ENCODE measurements at regions of chr11 and their contacts with region 1.

Region 1: DNA sequence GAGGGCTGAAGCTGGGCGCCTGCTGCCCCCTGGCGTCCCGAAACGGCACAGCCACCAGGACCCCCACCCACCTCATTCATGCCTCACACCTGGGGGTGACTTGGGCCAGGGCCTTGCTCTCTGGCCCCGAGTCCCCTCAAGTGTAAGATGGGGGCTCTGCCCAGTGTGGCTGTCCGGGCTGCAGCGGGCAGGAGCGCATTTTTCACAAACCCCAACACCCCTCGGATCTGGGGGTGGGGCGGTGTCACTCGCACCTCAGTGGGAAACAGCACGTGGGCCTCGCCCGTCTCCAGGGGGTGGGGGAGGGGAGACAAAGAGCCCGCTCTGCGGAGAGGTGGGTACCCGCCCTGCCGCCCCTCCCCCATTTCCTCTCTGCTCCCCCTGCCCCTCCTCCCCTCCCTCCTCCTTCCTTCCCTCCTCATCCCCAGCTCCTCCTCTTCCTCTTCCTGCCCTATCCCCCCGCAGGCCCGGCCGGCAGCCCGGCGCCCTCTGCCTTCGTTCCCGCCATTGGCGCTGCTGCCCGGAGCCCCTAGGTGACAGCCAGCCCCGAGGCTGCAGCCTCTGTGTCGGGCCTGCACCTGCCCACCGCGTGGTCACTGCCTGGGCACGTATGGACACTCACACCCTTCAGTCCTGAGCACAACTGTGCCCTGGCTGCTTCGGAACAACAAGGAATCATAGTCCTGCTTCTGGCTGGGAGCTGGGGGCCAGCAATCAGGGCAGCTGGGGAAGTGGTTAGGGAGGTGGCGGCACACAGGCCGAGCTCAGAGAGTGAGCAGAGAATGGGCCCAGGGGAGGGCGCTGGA is 6.8 kb upstream of the CDKN1C start:
- DNase-seq: peak; percentile 48 to 78 (median 67)
- ATAC-seq: peak; percentile 73
- H3K4me3 ChIP-seq: peak overlapping the region; percentile 53
- H3K4me3 Mint-ChIP-seq: peak overlapping the region; percentile 58 to 85 (median 76)
- H3K27ac ChIP-seq: peak overlapping the region; percentile 67
- H3K27ac Mint-ChIP-seq: peak overlapping the region; percentile 78 to 89 (median 84)
- H3K4me1 ChIP-seq: peaks cover 14 to 28% of the 10 kb centered on the region in 2 donors
- H3K4me1 Mint-ChIP-seq: peaks cover 15 to 37% (median 25%) of the 10 kb centered on the region in 7 donors
- H3K27me3 ChIP-seq: no peaks in the 10 kb centered on the region
- H3K27me3 Mint-ChIP-seq: peaks cover 0 to 6% (median 0%) of the 10 kb centered on the region in 5 donors

Region 2: GRCh38 chr11:2305140-2305840 is 587.1 kb before region 1 on chr11:
- CTCF ChIA-PET with region 1: interaction called, 3 read pairs
- POLR2A ChIA-PET with region 1: interaction called, 4 read pairs
- intact Hi-C with region 1: loop called (anchors 5 to 10 kb)
- DNase-seq: peak; percentile 62 to 84 (median 76)
- ATAC-seq: peak; percentile 65
- H3K4me3 ChIP-seq: peak overlapping the region; percentile 38
- H3K4me3 Mint-ChIP-seq: peak overlapping the region; percentile 77 to 98 (median 92)
- H3K27ac ChIP-seq: peak overlapping the region; percentile 81
- H3K27ac Mint-ChIP-seq: peak overlapping the region; percentile 86 to 96 (median 90)
- H3K4me1 ChIP-seq: peaks cover 40 to 55% of the 10 kb centered on the region in 2 donors
- H3K4me1 Mint-ChIP-seq: peaks cover 12 to 54% (median 36%) of the 10 kb centered on the region in 7 donors
- H3K27me3 ChIP-seq: no peaks in the 10 kb centered on the region
- H3K27me3 Mint-ChIP-seq: no peaks in the 10 kb centered on the region

Region 3: GRCh38 chr11:2428322-2428795 is 464.1 kb before region 1 on chr11:
- CTCF ChIA-PET with region 1: interaction called, 4 read pairs
- POLR2A ChIA-PET with region 1: no interaction called
- intact Hi-C with region 1: loop called (anchors 1 kb)
- DNase-seq: peak; percentile 67 to 85 (median 79)
- ATAC-seq: peak; percentile 87
- H3K4me3 ChIP-seq: no peak overlapping the region
- H3K4me3 Mint-ChIP-seq: no peak overlapping the region
- H3K27ac ChIP-seq: no peak overlapping the region
- H3K27ac Mint-ChIP-seq: no peak overlapping the region
- H3K4me1 ChIP-seq: no peaks in the 10 kb centered on the region
- H3K4me1 Mint-ChIP-seq: peaks cover 0 to 4% (median 0%) of the 10 kb centered on the region in 7 donors
- H3K27me3 ChIP-seq: no peaks in the 10 kb centered on the region
- H3K27me3 Mint-ChIP-seq: no peaks in the 10 kb centered on the region

Region 4: GRCh38 chr11:2666401-2666741 is 226.0 kb before region 1 on chr11:
- CTCF ChIA-PET with region 1: no interaction called
- POLR2A ChIA-PET with region 1: no interaction called
- intact Hi-C with region 1: no loop called
- DNase-seq: no peak
- ATAC-seq: no peak
- H3K4me3 ChIP-seq: no peak overlapping the region
- H3K4me3 Mint-ChIP-seq: no peak overlapping the region
- H3K27ac ChIP-seq: no peak overlapping the region
- H3K27ac Mint-ChIP-seq: no peak overlapping the region
- H3K4me1 ChIP-seq: no peaks in the 10 kb centered on the region
- H3K4me1 Mint-ChIP-seq: peaks cover 0 to 6% (median 2%) of the 10 kb centered on the region in 7 donors
- H3K27me3 ChIP-seq: no peaks in the 10 kb centered on the region
- H3K27me3 Mint-ChIP-seq: no peaks in the 10 kb centered on the region

Region 5: DNA sequence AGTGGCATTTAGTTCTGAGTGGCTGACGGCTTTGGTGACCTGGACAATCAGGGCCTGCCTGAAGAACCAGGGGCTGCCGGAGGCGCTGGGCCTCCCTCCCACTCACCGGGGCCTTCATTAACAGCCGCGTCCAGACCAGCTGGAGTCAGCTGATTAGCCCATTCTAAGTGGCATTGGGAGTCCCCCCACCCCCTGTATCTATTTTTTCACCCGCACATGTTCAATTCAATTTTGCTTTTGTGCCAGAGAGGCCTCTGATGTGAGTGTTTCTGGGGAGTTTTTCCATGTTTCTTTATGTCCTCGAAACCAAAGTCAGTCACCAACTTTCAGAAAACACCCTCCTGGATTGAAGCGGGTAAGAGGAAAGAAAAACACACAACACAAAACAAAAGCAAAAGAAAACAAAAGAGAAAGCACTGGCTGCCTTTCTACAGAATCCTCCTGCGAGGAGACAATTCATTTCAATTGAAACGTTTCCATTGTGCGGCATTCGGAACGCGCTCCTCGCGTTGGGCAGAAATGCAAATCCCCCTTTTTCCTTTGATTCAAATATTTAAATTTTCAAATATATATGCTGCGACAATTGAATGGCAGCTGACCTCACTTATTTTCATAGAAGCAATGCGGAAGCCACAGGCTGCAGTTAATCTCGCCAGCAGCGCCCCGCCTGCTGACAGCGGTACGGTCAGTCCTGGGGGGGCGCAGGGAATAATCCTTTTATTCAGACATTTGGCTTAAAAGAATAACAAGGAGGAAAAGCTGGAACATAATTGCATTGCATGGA is 24.5 kb before region 1 on chr11:
- CTCF ChIA-PET with region 1: no interaction called
- POLR2A ChIA-PET with region 1: no interaction called
- intact Hi-C with region 1: no loop called
- DNase-seq: no peak
- ATAC-seq: no peak
- H3K4me3 ChIP-seq: no peak overlapping the region
- H3K4me3 Mint-ChIP-seq: peak overlapping the region in 5 of 10 donors; percentile 10 to 58 (median 50)
- H3K27ac ChIP-seq: no peak overlapping the region
- H3K27ac Mint-ChIP-seq: no peak overlapping the region
- H3K4me1 ChIP-seq: no peaks in the 10 kb centered on the region
- H3K4me1 Mint-ChIP-seq: peaks cover 0 to 18% (median 15%) of the 10 kb centered on the region in 7 donors
- H3K27me3 ChIP-seq: peaks cover 0 to 4% of the 10 kb centered on the region in 2 donors
- H3K27me3 Mint-ChIP-seq: peaks cover 51 to 72% (median 54%) of the 10 kb centered on the region in 5 donors

Region 6: GRCh38 chr11:2930704-2931428 is 38.4 kb after region 1 on chr11:
- CTCF ChIA-PET with region 1: interaction called, 9 read pairs
- POLR2A ChIA-PET with region 1: no interaction called
- intact Hi-C with region 1: loop called (anchors 1 to 2 kb)
- DNase-seq: peak in 1 of 9 donors; percentile 61
- ATAC-seq: peak; percentile 14
- H3K4me3 ChIP-seq: peak overlapping the region; percentile 61
- H3K4me3 Mint-ChIP-seq: peak overlapping the region; percentile 66 to 86 (median 78)
- H3K27ac ChIP-seq: no peak overlapping the region
- H3K27ac Mint-ChIP-seq: peak overlapping the region in 4 of 9 donors; percentile 32 to 76 (median 46)
- H3K4me1 ChIP-seq: peaks cover 13 to 20% of the 10 kb centered on the region in 2 donors
- H3K4me1 Mint-ChIP-seq: peaks cover 14 to 35% (median 20%) of the 10 kb centered on the region in 7 donors
- H3K27me3 ChIP-seq: peaks cover 3 to 4% of the 10 kb centered on the region in 2 donors
- H3K27me3 Mint-ChIP-seq: peaks cover 4 to 30% (median 8%) of the 10 kb centered on the region in 5 donors

Region 7: DNA sequence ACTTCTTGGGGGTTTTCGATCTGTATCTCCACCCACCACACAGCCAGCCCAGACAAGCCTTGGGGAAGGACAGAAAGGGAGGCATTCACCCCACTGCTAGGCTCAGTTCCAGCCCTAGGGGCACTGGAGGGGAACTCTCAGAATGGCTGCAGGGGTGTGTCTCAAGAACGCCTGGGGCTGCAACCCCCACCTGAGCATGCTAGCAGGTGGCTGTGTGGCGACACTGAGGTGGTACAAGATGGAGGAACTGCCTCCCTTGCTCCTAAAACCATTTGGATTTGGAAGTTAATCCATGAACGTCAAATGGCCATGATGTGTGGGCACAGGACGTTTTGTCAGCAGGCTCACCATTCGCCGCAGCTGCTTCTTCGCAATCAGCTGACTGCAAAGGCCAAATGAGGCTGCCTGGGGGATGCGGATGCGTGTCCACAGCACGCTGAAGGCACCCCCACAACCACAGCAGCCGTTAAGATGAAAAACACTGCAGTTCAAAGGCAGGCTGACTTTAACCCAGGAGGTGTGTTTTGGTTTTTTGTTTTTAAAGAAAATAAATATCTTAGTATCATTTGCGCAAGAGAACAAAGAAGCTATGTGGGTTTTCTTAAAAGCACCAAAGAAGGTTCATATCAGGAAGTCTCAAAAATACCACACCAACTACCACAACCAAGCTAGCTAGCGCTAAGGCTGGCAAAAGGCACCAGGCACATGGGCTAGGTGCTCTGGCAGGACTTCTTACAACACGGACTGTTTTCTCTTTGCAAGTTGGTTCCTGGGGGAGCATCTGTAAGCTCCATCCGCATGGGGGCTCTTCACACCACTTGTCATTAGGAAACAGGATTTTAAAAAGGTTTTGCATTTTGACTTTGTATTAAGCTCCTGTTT is 121.9 kb after region 1 on chr11:
- CTCF ChIA-PET with region 1: no interaction called
- POLR2A ChIA-PET with region 1: interaction called, 13 read pairs
- intact Hi-C with region 1: loop called in 1 of 2 experiments (anchors 2 kb)
- DNase-seq: peak; percentile 43 to 95 (median 90)
- ATAC-seq: peak; percentile 93
- H3K4me3 ChIP-seq: peak overlapping the region; percentile 46
- H3K4me3 Mint-ChIP-seq: peak overlapping the region; percentile 60 to 82 (median 72)
- H3K27ac ChIP-seq: peak overlapping the region; percentile 45
- H3K27ac Mint-ChIP-seq: peak overlapping the region; percentile 80 to 97 (median 93)
- H3K4me1 ChIP-seq: peaks cover 30 to 36% of the 10 kb centered on the region in 2 donors
- H3K4me1 Mint-ChIP-seq: peaks cover 11 to 60% (median 40%) of the 10 kb centered on the region in 7 donors
- H3K27me3 ChIP-seq: no peaks in the 10 kb centered on the region
- H3K27me3 Mint-ChIP-seq: no peaks in the 10 kb centered on the region

Region 8: DNA sequence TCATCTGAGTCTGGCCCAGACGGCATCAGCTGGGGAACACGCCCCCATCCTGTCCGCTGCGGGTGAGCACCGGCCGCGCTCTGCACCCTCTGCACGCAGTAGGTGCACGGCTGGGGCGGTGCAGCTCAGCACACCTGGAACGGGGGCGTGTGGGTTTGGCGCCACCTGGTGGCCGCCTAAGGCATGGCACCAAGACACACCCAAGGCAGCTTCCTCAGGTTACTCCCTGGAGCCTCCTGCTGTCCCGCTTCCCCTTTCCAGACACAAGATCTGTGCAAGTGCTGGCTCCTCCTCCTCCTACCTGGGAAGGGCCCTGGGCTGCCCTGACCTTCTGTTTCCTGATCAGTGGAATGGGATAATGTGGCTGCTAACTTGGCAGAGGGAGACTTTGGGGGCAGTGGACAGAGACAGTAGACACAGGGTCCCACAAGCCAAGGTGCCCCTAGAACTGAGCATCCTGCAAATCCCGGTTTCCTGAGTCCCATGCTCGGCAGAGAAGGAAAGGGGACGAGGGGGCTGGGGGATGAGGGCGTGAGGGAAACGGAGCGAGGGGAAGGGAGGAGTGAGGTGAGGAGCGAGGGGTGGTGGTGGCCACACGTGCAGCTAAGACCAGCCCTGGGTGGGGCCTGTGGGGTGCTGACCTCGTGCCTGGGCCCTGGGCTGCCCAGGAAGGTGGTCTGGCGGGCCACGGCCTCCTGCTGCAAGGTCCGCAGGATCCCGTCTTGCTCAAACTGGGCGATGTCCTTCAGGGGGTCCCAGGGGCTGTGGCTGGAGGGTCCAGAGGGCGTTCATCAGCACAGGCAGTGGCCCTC is 199.6 kb after region 1 on chr11:
- CTCF ChIA-PET with region 1: interaction called, 12 read pairs
- POLR2A ChIA-PET with region 1: no interaction called
- intact Hi-C with region 1: loop called (anchors 1 to 2 kb)
- DNase-seq: peak; percentile 38 to 79 (median 66)
- ATAC-seq: peak; percentile 87
- H3K4me3 ChIP-seq: no peak overlapping the region
- H3K4me3 Mint-ChIP-seq: no peak overlapping the region
- H3K27ac ChIP-seq: no peak overlapping the region
- H3K27ac Mint-ChIP-seq: peak overlapping the region in 1 of 9 donors; percentile 26
- H3K4me1 ChIP-seq: no peaks in the 10 kb centered on the region
- H3K4me1 Mint-ChIP-seq: peaks cover 0 to 16% (median 0%) of the 10 kb centered on the region in 7 donors
- H3K27me3 ChIP-seq: no peaks in the 10 kb centered on the region
- H3K27me3 Mint-ChIP-seq: peaks cover 0 to 4% (median 0%) of the 10 kb centered on the region in 5 donors

Region 9: DNA sequence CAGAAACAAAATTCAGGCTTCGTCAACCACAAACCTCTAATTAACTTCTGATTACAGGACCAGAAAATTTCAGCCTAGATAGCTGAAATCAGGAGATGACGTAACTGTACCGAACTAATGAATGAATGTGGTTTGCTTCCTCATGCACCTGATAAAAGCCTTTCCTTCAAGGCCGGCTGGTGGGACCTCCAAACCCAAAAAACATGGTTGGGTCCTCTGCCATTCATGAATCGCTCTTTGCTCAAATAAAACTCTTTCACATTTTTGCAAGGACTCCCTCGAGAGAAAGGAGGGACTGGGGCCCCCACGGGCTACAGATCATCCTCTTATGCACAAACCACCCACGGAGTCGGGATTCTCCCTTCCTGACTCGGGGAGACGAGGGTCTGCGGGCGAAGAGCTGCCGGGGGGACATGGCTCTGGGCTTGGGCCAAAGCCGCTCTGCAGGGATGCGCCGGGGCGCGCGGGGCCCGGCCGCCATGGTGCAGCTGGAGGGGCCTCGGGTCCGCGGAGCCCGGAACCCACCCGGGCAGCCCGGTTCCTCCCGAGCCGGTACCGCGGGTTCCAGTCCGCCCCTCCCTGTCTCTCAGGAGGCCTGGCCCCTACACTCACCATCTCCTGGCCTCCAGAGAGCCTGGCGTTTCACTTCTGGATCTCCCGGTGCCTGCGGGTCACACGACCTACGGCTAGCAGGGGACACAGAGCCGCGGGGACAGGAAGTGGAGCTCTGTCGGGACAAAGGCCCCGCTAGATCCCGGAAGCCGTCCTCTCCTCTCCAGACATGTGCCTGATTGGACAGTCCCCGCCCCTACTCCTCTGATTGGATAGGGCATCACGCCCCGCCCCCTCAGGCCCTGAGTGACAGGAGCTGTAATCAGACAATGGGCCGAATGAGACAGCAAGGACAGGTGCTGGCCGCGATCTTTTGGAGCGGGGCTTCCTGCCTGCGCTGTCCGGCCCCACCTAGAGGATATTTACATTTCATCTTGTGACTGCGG is 486.3 kb after region 1 on chr11 and contains the start of gene ZNF195:
- CTCF ChIA-PET with region 1: no interaction called
- POLR2A ChIA-PET with region 1: no interaction called
- intact Hi-C with region 1: loop called in 1 of 2 experiments (anchors 5 kb)
- DNase-seq: peak; percentile 91 to 97 (median 95)
- ATAC-seq: peak; percentile 100
- H3K4me3 ChIP-seq: peak within 1 kb of the TSS; percentile 96
- H3K4me3 Mint-ChIP-seq: peak within 1 kb of the TSS; percentile 95 to 100 (median 98)
- H3K27ac ChIP-seq: peak within 1 kb of the TSS; percentile 90
- H3K27ac Mint-ChIP-seq: peak within 1 kb of the TSS; percentile 93 to 98 (median 98)
- H3K4me1 ChIP-seq: peaks cover 17 to 23% of the 10 kb centered on the region in 2 donors
- H3K4me1 Mint-ChIP-seq: peaks cover 30 to 67% (median 61%) of the 10 kb centered on the region in 7 donors
- H3K27me3 ChIP-seq: no peaks in the 10 kb centered on the region
- H3K27me3 Mint-ChIP-seq: no peaks in the 10 kb centered on the region
- total RNA-seq, gene ZNF195: 18.4 to 39.0 (median 33.7) TPM

Measured in naive thymus-derived CD4-positive, alpha-beta T cell (primary cell).